PC-9 (cell line): ENCODE measurements at regions of chr9 and their contacts with region 1.

Region 1: DNA sequence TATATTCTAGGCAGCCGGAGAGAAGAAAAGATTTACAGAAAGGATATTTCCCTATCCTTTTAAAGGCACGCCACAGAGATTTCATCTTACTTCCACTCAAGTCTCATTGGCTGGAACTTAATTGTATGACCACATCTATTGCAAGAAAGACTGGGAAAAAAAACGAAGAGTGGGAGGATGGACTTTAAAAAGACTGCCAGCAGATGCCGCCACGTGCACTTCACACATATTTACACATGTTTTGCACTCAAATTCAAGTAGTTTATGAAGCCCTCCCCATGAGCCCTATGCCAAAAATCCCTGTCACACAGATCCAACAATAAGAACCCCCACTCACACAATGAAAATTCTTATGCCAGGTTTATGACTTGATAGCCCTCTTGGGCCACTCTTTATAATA is 138.5 kb upstream of the TYRP1 start:
- DNase-seq: no peak
- H3K4me3 ChIP-seq: no peak overlapping the region
- H3K27ac ChIP-seq: no peak overlapping the region
- H3K4me1 ChIP-seq: no peaks in the 10 kb centered on the region
- H3K27me3 ChIP-seq: no peaks in the 10 kb centered on the region
- CTCF ChIP-seq: no peak

Region 2: DNA sequence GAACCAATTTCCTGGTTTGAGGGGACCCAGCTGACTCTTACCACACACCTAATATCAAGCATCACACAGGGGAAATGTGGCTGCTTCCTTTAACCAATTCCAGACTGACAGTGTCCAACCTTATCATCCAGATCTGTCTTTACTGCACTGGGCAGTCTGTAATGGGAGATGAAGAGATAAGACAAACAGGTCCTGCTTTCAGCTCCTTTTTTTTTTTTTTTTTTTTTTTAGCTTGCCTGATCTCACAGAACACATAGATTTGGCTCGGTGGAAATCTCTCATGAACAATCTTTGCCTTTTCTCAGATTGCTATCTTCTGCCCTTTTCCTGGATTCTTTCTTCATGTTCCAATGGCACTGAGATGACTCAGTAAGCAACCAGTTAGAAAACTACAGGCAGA is 60.2 kb before region 1 on chr9:
- CTCF ChIA-PET with region 1: no interaction called
- POLR2A ChIA-PET with region 1: no interaction called
- intact Hi-C with region 1: no loop called
- DNase-seq: no peak
- H3K4me3 ChIP-seq: no peak overlapping the region
- H3K27ac ChIP-seq: no peak overlapping the region
- H3K4me1 ChIP-seq: no peaks in the 10 kb centered on the region
- H3K27me3 ChIP-seq: no peaks in the 10 kb centered on the region
- CTCF ChIP-seq: no peak

Region 3: GRCh38 chr9:12629067-12629466 is 74.4 kb after region 1 on chr9:
- CTCF ChIA-PET with region 1: no interaction called
- POLR2A ChIA-PET with region 1: no interaction called
- intact Hi-C with region 1: loop called (anchors 10 kb)
- DNase-seq: no peak
- H3K4me3 ChIP-seq: no peak overlapping the region
- H3K27ac ChIP-seq: no peak overlapping the region
- H3K4me1 ChIP-seq: no peaks in the 10 kb centered on the region
- H3K27me3 ChIP-seq: no peaks in the 10 kb centered on the region
- CTCF ChIP-seq: no peak